ENCODE measurements at regions of chr10 and their contacts with region 1.

Region 1: GRCh38 chr10:119608316-119609155 is 11.8 kb upstream of the TIAL1 start:
- DNase-seq: no peak

Region 2: DNA sequence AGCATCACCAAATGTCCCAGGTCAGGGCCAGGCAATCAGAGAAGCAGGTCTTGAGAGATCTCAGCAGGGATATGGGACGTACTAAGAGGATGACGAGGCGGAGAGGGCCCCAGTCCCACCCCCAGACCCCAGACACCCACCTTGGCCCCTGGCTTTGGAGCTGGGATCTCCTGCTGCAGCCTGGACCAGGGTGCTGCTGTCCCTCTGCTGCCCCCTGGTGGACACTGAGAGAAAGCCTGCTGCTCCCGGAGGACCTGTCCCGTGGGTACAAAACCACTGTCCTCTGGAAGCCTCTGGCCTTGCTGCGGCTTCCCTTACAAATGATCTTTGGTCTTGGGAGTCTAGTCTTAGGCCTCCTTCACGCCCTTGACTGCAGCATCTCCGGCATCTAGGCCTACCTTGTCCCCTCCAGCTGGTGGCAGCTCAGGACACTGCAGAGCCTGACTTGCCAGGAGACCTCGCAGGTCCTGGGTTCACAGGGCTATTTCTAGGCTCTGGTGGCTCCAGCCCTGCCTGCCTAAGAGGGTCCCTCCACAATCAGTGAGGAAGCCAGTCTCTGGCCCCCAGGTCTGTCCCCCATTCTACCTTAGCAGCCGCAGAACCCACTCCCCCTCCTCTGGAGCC is 163.1 kb before region 1 on chr10:
- intact Hi-C with region 1: no loop called
- DNase-seq: peak; percentile 95

Region 3: DNA sequence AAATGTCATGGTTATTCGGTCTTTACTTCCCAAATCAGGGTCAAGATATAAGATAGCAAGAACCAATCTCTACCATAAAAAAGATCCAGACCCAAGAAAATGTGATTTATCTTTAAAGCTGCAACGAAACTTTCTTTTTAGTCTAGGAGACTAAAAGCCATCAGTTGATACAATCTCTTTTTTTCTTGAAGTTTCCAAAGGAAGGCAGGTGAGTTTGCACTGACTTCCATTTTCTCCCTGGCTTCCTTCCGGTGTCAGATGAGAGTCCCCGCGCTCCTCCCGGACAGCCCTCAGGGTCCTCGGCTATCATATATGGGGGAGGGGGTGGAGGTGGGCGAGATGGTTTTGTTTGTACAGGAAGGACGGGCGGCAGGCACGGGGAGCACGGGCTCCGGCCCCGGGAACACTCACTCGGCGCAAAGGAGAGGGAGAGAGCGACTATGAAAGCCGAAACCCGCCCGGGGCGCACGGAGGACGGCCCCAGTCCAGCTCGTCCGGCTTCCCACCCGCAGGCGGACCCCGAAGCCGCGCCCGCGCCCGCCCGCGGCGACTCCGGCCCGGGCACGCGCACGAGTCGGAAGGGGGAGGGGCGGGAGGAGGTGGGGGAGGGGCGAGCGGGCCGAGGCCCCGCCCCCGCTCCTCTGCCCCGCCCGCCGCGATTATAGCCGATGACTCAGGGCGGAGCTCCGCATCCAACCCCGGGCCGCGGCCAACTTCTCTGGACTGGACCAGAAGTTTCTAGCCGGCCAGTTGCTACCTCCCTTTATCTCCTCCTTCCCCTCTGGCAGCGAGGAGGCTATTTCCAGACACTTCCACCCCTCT is 42.4 kb after region 1 on chr10 and contains the start of gene BAG3:
- intact Hi-C with region 1: loop called (anchors 5 kb)
- DNase-seq: peak; percentile 98
- total RNA-seq, gene BAG3: 172 TPM

Region 4: GRCh38 chr10:119725828-119726675 is 117.5 kb after region 1 on chr10 and contains the start of gene INPP5F:
- intact Hi-C with region 1: loop called (anchors 10 kb)
- DNase-seq: peak; percentile 100
- total RNA-seq, gene INPP5F: 20.2 TPM

Measured in cardiac septum (tissue), 1 donor.